ENCODE measurements at regions of chr1 and their contacts with region 1.

Region 1: DNA sequence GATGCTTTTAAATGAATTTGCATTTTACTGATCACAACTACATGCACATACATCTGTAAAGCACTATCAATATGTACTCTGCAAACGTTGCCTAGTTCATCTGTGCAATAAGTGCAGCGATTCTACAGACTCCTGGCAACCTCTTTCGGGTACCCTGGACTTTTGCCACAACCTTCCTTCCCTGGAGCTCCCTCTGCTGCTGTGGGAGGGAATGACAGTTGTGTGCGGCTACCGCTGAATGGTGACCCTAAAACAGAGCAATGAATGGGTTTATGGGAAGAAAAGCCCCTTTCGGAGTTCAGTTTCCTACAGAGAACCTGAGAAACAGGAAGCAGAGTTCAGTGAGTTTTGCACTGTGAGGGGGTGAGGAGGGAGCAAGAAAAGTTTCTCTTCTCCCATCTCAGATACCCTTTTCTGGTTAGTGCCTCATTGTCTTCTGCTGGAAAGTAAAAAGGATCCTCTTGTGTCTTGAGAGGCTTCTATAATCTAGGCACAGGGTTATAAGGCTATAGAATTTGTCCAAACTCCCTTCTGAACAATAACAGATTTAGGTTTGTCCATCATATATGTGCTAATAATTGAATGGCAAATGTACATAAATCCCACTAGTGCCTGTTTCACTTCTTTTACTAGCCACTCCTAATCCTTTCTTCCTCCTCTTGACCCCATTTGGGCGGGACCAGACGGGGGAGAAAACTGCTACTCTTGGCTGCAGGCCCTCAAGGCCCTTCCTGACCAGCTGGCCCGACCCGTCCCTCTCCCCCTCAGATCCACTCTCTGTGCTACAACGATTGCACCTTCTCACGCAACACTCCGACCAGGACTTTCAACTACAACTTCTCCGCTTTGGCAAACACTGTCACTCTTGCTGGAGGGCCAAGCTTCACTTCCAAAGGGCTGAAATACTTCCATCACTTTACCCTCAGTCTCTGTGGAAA is 19.8 kb upstream of the SARS1 start:
- DNase-seq: no peak
- H3K4me3 ChIP-seq: no peak overlapping the region
- H3K27ac ChIP-seq: no peak overlapping the region
- H3K4me1 ChIP-seq: peaks cover 21% of the 10 kb centered on the region
- H3K27me3 ChIP-seq: no peaks in the 10 kb centered on the region
- CTCF ChIP-seq: peak; percentile 91 to 96

Region 2: GRCh38 chr1:109090196-109091077 is 103.5 kb before region 1 on chr1 and contains the start of gene TMEM167B:
- CTCF ChIA-PET with region 1: no interaction called
- dilution Hi-C with region 1: no loop called
- in situ Hi-C with region 1: no loop called
- intact Hi-C with region 1: loop called (anchors 2 kb)
- DNase-seq: peak; percentile 91
- H3K4me3 ChIP-seq: peak within 1 kb of the TSS; percentile 65 to 81 (median 77)
- H3K27ac ChIP-seq: peak within 1 kb of the TSS; percentile 77
- H3K4me1 ChIP-seq: peaks cover 9% of the 10 kb centered on the region
- H3K27me3 ChIP-seq: no peaks in the 10 kb centered on the region
- CTCF ChIP-seq: no peak
- total RNA-seq, gene TMEM167B: 24.8 to 27.4 TPM

Region 3: GRCh38 chr1:109099938-109100773 is 93.8 kb before region 1 on chr1:
- CTCF ChIA-PET with region 1: no interaction called
- dilution Hi-C with region 1: no loop called
- in situ Hi-C with region 1: loop called in 1 of 2 experiments (anchors 5 kb)
- intact Hi-C with region 1: no loop called
- DNase-seq: peak; percentile 94
- H3K4me3 ChIP-seq: peak overlapping the region; percentile 76 to 90 (median 84)
- H3K27ac ChIP-seq: peak overlapping the region; percentile 80
- H3K4me1 ChIP-seq: peaks cover 8% of the 10 kb centered on the region
- H3K27me3 ChIP-seq: no peaks in the 10 kb centered on the region
- CTCF ChIP-seq: peak; percentile 83 to 93

Region 4: DNA sequence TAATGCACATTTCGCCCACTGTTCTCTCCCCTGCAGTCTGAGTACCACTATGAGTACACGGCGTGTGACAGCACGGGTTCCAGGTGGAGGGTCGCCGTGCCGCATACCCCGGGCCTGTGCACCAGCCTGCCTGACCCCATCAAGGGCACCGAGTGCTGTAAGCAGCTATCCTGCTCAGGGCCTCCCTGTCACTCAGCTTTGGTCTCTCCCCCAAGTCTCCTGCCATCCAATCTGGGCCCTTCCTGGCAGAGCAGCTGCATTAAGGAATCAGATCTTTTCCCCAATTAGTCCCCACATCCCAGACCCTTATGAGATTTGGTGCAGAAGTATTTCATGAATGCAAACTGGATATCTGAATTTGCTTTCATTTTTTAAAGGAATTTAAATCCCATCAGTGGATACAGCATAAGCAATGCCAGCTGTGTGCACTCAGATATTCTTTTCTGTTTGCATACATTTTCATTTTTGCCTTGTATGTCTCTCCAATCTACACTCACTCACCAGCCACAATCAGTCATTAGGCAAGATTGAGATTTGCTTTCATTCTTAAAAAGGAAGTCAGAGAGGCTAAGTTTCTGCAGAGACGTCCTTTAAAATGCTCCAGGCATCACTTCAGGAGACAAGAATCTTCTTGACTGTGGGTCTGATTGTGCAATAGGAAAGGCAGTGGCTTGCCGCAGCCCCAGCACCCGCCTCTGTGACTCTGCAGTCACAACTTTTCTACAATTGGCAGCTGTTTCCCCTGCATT is 31.9 kb before region 1 on chr1:
- CTCF ChIA-PET with region 1: no interaction called
- dilution Hi-C with region 1: no loop called
- in situ Hi-C with region 1: no loop called
- intact Hi-C with region 1: loop called (anchors 2 kb)
- DNase-seq: peak; percentile 84
- H3K4me3 ChIP-seq: peak overlapping the region in 1 of 3 experiments; percentile 24
- H3K27ac ChIP-seq: no peak overlapping the region
- H3K4me1 ChIP-seq: peaks cover 17% of the 10 kb centered on the region
- H3K27me3 ChIP-seq: no peaks in the 10 kb centered on the region
- CTCF ChIP-seq: no peak

Region 5: DNA sequence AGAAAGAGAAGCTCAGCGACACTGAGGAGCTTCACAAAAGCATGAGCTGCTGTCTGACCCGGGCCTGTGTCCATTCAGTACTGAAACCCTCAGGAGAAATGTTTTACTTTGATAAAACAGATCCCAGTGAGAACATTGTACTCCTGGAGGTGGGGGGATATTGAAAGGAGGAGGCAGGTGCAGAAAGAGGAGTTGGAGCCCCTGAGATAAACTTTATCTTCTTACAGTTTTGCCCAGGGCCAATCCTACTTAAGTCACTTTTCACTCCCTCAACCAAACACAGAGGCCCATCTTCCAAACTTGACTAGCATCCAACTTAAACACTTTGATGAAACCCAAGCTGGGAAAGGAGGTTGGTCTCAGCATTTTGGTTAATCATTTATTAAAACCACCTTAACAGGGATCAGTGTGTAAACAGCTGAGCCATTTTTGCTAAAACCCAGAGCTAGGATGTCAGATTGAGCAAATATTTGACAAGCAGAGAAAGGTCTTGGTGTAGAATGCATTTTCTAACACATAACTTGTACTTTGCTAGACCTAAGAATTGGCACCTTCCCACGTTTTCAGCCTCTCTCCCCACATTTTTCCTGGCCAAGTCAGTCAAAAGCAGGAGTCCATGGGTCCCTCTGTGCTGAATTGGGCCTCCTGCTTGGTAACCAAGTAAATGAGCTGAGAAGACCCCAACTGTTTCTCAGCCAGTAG is 12.7 kb before region 1 on chr1:
- CTCF ChIA-PET with region 1: no interaction called
- dilution Hi-C with region 1: no loop called
- in situ Hi-C with region 1: no loop called
- intact Hi-C with region 1: no loop called
- DNase-seq: no peak
- H3K4me3 ChIP-seq: no peak overlapping the region
- H3K27ac ChIP-seq: no peak overlapping the region
- H3K4me1 ChIP-seq: peaks cover 5% of the 10 kb centered on the region
- H3K27me3 ChIP-seq: no peaks in the 10 kb centered on the region
- CTCF ChIP-seq: no peak

Region 6: DNA sequence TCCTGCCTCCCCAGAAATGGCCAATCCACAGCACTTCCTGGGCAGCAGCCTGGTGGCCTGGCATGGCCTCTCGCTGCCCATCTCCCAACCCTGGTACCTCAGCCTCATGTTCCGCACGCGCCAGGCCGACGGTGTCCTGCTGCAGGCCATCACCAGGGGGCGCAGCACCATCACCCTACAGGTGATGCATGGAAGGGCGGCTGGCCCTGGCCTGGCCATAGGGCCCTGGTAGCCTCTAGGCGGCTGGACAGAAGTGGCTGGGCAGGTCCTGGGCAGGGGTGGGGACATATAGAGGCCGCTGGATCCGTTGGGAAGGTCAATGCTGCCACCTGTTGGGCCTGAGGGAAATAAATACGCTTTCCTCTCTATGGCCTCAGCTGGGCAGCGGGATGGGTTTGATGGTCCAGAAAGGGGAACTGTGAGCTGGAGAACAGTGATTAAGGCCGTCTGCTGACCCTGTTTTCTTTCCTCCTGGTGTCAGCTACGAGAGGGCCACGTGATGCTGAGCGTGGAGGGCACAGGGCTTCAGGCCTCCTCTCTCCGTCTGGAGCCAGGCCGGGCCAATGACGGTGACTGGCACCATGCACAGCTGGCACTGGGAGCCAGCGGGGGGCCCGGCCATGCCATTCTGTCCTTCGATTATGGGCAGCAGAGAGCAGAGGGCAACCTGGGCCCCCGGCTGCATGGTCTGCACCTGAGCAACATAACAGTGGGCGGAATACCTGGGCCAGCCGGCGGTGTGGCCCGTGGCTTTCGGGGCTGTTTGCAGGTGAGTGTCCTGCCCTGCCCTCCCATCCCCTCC is 69.9 kb after region 1 on chr1:
- CTCF ChIA-PET with region 1: no interaction called
- dilution Hi-C with region 1: no loop called
- in situ Hi-C with region 1: loop called in 1 of 2 experiments (anchors 5 kb)
- intact Hi-C with region 1: no loop called
- DNase-seq: no peak
- H3K4me3 ChIP-seq: no peak overlapping the region
- H3K27ac ChIP-seq: peak overlapping the region; percentile 40
- H3K4me1 ChIP-seq: peaks cover 32% of the 10 kb centered on the region
- H3K27me3 ChIP-seq: no peaks in the 10 kb centered on the region
- CTCF ChIP-seq: peak; percentile 100

Region 7: GRCh38 chr1:109397538-109398342 is 203.8 kb after region 1 on chr1 and contains the start of gene SORT1:
- CTCF ChIA-PET with region 1: no interaction called
- dilution Hi-C with region 1: no loop called
- in situ Hi-C with region 1: loop called in 1 of 2 experiments (anchors 10 kb)
- intact Hi-C with region 1: no loop called
- DNase-seq: peak; percentile 77
- H3K4me3 ChIP-seq: peak within 1 kb of the TSS; percentile 54 to 73 (median 65)
- H3K27ac ChIP-seq: peak within 1 kb of the TSS; percentile 16
- H3K4me1 ChIP-seq: peaks cover 20% of the 10 kb centered on the region
- H3K27me3 ChIP-seq: no peaks in the 10 kb centered on the region
- CTCF ChIP-seq: no peak
- total RNA-seq, gene SORT1: 24.6 to 41.8 TPM

Measured in mammary epithelial cell (primary cell).